ENCODE measurements at regions of chrX and their contacts with region 1.

Region 1: DNA sequence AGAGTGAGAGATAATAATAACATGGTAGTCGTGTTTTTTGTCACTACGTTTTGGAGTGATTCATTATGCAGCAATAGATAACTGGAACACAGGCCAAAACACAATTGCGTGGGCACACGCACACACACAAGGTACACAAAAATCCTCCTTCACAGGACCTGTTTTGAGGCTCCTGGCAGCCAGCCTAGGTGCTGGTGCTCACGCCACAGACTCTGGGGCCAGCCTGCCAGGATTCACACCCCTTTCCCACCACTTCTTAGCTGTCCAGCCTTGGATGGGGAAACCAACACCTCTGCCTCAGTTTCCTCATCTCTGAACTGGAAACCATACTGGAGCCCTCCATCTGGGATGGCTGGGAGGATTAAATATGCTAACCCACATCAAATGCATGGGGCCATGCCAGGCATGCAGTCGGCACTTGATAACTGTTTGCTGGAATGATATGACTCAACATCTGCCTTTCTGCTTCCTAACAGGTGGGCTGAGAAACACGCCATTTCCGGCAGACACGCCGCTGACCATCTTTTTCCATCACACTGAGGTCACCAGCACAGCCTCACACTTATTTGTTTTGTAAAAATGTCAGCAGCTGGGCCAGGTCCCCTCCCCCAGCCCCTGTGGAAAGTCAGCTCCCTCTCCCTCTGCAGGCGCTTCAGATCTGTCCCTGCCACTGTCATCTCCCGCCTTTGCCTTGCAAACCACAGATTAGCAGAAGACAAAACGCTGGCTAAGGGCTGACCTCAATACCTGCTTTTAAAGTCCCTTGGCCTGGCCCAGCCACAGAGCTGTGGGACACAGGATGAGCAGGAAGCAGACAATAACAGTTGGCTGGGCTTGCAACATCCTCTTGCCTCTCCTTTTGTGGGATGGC is 237.5 kb downstream of the BCOR start:
- DNase-seq: peak; percentile 28 to 90 (median 38)
- H3K4me3 ChIP-seq: no peak overlapping the region
- H3K4me3 Mint-ChIP-seq: peak overlapping the region in 5 of 8 donors; percentile 12 to 67 (median 58)
- H3K27ac ChIP-seq: no peak overlapping the region
- H3K27ac Mint-ChIP-seq: peak overlapping the region; percentile 19 to 98 (median 69)
- H3K4me1 ChIP-seq: peaks cover 28% of the 10 kb centered on the region
- H3K4me1 Mint-ChIP-seq: peaks cover 13 to 49% (median 29%) of the 10 kb centered on the region in 4 donors
- H3K27me3 ChIP-seq: no peaks in the 10 kb centered on the region
- H3K27me3 Mint-ChIP-seq: no peaks in the 10 kb centered on the region

Region 2: GRCh38 chrX:39772057-39772832 is 88.0 kb before region 1 on chrX:
- CTCF ChIA-PET with region 1: no interaction called
- POLR2A ChIA-PET with region 1: interaction called, 13 read pairs
- intact Hi-C with region 1: loop called (anchors 2 kb)
- DNase-seq: peak; percentile 33 to 74 (median 41)
- H3K4me3 ChIP-seq: no peak overlapping the region
- H3K4me3 Mint-ChIP-seq: peak overlapping the region in 7 of 8 donors; percentile 46 to 85 (median 70)
- H3K27ac ChIP-seq: peak overlapping the region; percentile 48
- H3K27ac Mint-ChIP-seq: peak overlapping the region; percentile 83 to 95 (median 90)
- H3K4me1 ChIP-seq: peaks cover 64% of the 10 kb centered on the region
- H3K4me1 Mint-ChIP-seq: peaks cover 31 to 59% (median 42%) of the 10 kb centered on the region in 4 donors
- H3K27me3 ChIP-seq: no peaks in the 10 kb centered on the region
- H3K27me3 Mint-ChIP-seq: no peaks in the 10 kb centered on the region

Region 3: DNA sequence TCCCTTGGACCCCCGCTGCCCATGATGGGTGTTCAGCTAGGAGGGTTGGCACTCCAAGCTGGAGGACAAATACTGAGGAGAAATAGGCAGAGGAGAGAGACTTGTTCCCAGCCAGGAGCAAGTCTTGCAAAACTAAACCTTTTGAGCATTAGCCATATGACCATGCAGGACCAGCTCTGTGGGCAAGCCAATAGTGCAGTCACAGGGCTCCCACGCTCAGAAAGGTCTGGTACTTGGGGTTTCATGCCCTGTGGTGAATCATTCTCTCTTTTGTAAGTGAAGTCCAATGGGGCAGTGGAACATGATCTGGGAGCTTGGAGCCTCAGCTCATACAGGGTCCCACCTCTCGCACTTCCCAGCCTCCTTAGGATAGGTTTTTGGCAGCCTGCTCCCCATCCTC is 63.4 kb before region 1 on chrX:
- CTCF ChIA-PET with region 1: no interaction called
- POLR2A ChIA-PET with region 1: no interaction called
- intact Hi-C with region 1: no loop called
- DNase-seq: no peak
- H3K4me3 ChIP-seq: no peak overlapping the region
- H3K4me3 Mint-ChIP-seq: no peak overlapping the region
- H3K27ac ChIP-seq: no peak overlapping the region
- H3K27ac Mint-ChIP-seq: no peak overlapping the region
- H3K4me1 ChIP-seq: no peaks in the 10 kb centered on the region
- H3K4me1 Mint-ChIP-seq: no peaks in the 10 kb centered on the region
- H3K27me3 ChIP-seq: no peaks in the 10 kb centered on the region
- H3K27me3 Mint-ChIP-seq: no peaks in the 10 kb centered on the region

Region 4: GRCh38 chrX:39874202-39874816 is 14.1 kb after region 1 on chrX:
- CTCF ChIA-PET with region 1: no interaction called
- POLR2A ChIA-PET with region 1: interaction called, 20 read pairs
- intact Hi-C with region 1: loop called (anchors 1 kb)
- DNase-seq: peak in 1 of 5 donors; percentile 47
- H3K4me3 ChIP-seq: no peak overlapping the region
- H3K4me3 Mint-ChIP-seq: no peak overlapping the region
- H3K27ac ChIP-seq: no peak overlapping the region
- H3K27ac Mint-ChIP-seq: peak overlapping the region in 4 of 7 donors; percentile 0 to 52 (median 42)
- H3K4me1 ChIP-seq: peaks cover 22% of the 10 kb centered on the region
- H3K4me1 Mint-ChIP-seq: peaks cover 15 to 38% (median 24%) of the 10 kb centered on the region in 4 donors
- H3K27me3 ChIP-seq: no peaks in the 10 kb centered on the region
- H3K27me3 Mint-ChIP-seq: no peaks in the 10 kb centered on the region

Region 5: DNA sequence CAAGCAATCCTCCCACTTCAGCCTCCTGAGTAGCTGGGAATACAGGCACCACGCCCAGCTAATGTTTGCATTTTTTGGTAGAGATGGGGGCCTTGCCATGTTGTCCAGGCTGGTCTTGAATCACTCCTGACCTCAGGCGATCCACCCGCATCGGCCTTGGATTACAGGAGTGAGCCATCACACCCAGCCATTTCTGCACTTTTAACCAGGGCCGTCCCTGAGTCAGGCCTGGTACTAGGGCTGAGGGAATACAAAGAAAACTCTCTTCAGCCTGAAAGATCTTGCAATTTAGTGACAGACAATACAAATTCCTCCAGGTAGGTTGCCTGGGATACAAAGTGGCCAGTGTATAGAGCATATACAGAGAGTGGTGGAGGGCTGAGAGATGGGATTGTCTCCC is 171.7 kb after region 1 on chrX:
- CTCF ChIA-PET with region 1: no interaction called
- POLR2A ChIA-PET with region 1: no interaction called
- intact Hi-C with region 1: no loop called
- DNase-seq: no peak
- H3K4me3 ChIP-seq: no peak overlapping the region
- H3K4me3 Mint-ChIP-seq: no peak overlapping the region
- H3K27ac ChIP-seq: no peak overlapping the region
- H3K27ac Mint-ChIP-seq: no peak overlapping the region
- H3K4me1 ChIP-seq: no peaks in the 10 kb centered on the region
- H3K4me1 Mint-ChIP-seq: peaks cover 0 to 2% (median 0%) of the 10 kb centered on the region in 4 donors
- H3K27me3 ChIP-seq: no peaks in the 10 kb centered on the region
- H3K27me3 Mint-ChIP-seq: no peaks in the 10 kb centered on the region

Region 6: DNA sequence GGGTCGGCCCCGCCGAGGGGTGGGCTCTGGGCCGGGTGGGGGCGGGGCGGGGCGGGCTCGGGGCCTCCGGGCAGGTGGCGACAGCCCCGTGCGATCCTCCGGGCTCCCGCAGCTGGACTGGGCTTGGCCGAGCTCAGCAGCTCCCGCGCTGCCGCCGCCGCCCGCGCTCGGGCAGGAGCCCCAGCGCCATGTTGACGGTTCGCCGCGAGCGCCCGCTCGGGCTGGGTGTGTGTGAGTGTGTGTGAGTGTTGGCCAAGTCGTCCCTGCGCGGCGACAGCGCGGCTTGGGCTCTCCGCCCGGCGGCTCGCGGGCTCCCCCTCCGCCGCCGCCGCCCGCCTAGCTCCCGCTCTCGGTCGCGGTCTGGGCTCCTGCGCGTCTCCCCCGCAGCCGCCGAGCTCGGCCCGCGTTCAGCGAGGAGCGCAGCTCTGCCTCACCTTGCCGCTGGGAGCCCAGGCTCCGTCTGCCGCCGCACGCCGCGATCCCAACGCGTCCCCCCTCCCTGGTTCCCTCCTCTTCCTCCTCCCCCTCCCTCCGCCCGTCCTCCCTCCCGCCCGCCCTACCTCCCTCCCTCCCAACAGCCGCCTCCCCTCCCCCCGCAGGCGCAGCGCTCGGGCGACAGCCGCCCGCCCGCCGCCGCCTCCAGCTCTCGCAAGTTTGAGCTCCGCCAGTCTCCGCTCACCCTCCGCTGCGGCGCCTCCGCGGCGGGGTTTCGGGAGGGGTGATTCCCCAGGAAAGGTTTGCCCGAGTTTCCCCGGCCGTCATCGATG is 237.5 kb after region 1 on chrX and contains the start of gene BCOR:
- CTCF ChIA-PET with region 1: no interaction called
- POLR2A ChIA-PET with region 1: interaction called, 25 read pairs
- intact Hi-C with region 1: no loop called
- DNase-seq: peak; percentile 69 to 75 (median 72)
- H3K4me3 ChIP-seq: peak within 1 kb of the TSS in 1 of 2 donors; percentile 58
- H3K4me3 Mint-ChIP-seq: peak within 1 kb of the TSS; percentile 89 to 95 (median 91)
- H3K27ac ChIP-seq: peak within 1 kb of the TSS; percentile 63
- H3K27ac Mint-ChIP-seq: peak within 1 kb of the TSS; percentile 79 to 96 (median 92)
- H3K4me1 ChIP-seq: peaks cover 22% of the 10 kb centered on the region
- H3K4me1 Mint-ChIP-seq: peaks cover 9 to 38% (median 23%) of the 10 kb centered on the region in 4 donors
- H3K27me3 ChIP-seq: no peaks in the 10 kb centered on the region
- H3K27me3 Mint-ChIP-seq: no peaks in the 10 kb centered on the region
- total RNA-seq, gene BCOR: 47.1 to 48.7 TPM

Region 7: DNA sequence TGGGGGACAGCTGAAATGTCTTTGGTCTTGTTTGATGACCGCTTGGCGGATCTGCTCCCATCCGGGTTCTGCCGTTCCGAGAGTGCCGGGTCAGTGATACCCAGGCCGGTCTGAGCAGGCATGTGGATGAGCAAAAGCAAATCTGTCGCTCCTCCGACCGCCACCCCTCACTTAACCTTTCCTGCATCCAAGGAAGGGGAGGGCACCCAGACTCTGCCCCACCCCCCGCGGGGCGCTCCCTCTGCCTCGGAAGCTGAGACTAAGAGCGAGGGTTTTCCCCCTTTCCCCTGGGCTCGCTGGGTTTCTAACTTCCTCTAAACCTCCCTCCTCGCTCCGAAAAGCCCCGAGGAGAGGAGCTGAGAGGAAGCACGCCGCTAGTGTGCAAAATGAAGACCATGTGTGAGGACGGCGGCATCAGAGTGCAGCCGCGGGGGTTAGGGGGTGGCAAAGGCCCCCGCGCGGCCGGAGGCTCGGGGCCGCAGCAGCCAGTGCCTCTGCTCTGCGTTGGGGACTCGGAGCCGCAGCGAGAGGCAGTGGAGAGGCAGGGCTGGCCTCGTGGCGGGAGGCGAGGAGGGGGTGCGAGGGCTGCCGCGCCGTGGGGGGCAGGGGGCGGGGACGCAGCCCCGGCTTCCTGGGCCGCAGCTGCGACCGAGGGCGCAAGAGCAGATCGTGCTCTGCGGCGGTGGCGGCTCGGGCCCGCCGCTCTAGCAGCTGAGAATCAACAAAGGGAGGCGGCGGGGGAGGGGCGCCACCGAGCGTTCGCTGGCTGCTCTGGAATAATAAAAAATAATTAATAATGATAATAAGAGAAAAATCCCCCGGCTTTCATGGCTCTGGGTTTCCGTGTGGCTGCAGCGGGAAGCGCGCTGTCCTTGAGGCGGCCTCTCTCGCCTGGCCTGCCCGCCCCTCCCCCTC is 293.4 kb after region 1 on chrX:
- CTCF ChIA-PET with region 1: no interaction called
- POLR2A ChIA-PET with region 1: interaction called, 11 read pairs
- intact Hi-C with region 1: no loop called
- DNase-seq: peak in 4 of 5 donors; percentile 44 to 83 (median 54)
- H3K4me3 ChIP-seq: peak overlapping the region; percentile 3 to 50
- H3K4me3 Mint-ChIP-seq: peak overlapping the region; percentile 81 to 92 (median 84)
- H3K27ac ChIP-seq: no peak overlapping the region
- H3K27ac Mint-ChIP-seq: peak overlapping the region; percentile 12 to 79 (median 60)
- H3K4me1 ChIP-seq: peaks cover under 1% of the 10 kb centered on the region
- H3K4me1 Mint-ChIP-seq: peaks cover 1 to 18% (median 11%) of the 10 kb centered on the region in 4 donors
- H3K27me3 ChIP-seq: no peaks in the 10 kb centered on the region
- H3K27me3 Mint-ChIP-seq: no peaks in the 10 kb centered on the region

Region 8: GRCh38 chrX:40244980-40245379 is 384.8 kb after region 1 on chrX:
- CTCF ChIA-PET with region 1: no interaction called
- POLR2A ChIA-PET with region 1: no interaction called
- intact Hi-C with region 1: no loop called
- DNase-seq: peak in 1 of 5 donors; percentile 33
- H3K4me3 ChIP-seq: no peak overlapping the region
- H3K4me3 Mint-ChIP-seq: peak overlapping the region in 2 of 8 donors; percentile 15 to 16
- H3K27ac ChIP-seq: no peak overlapping the region
- H3K27ac Mint-ChIP-seq: no peak overlapping the region
- H3K4me1 ChIP-seq: peaks cover 9% of the 10 kb centered on the region
- H3K4me1 Mint-ChIP-seq: peaks cover 5 to 10% (median 9%) of the 10 kb centered on the region in 4 donors
- H3K27me3 ChIP-seq: no peaks in the 10 kb centered on the region
- H3K27me3 Mint-ChIP-seq: peaks cover 0 to 2% of the 10 kb centered on the region in 2 donors